Naive thymus-derived CD4-positive, alpha-beta T cell (primary cell): ENCODE measurements at regions of chr3 and their contacts with region 1.

Region 1: DNA sequence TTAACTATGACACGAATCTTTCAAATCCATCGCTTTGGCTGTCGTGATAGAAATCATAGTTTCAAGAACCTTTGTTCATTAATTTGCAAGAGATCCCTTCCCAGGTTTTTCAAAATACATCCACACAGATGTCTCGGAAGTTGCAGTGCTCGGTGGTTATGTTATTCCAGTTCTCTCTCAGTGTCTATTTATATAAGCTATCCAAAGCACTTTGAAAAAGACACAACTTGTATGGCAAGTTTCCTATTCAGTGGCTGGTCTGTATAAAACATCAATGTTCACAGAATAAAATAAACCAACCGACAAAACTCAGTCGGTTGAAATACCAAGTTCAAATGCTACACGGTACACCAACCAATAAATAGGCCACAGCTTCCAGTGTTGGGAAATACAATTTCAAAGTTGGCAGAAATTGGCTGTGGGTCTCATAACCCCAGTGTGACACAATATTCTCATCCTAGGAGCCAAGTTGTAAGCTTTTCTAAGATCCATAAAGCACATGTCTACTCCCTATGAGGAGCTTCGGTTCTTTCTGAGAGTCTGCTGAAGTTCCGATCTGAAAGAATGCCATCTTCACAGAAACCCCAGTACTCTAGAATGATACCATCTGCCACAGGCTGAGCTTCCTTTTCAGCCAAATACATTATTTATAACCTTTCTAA is 23.7 kb downstream of the SATB1 start:
- DNase-seq: no peak
- ATAC-seq: peak; percentile 53
- H3K4me3 ChIP-seq: peak overlapping the region; percentile 3
- H3K4me3 Mint-ChIP-seq: peak overlapping the region; percentile 35 to 85 (median 80)
- H3K27ac ChIP-seq: peak overlapping the region; percentile 64
- H3K27ac Mint-ChIP-seq: peak overlapping the region; percentile 78 to 96 (median 87)
- H3K4me1 ChIP-seq: peaks cover 0 to 92% of the 10 kb centered on the region in 2 donors
- H3K4me1 Mint-ChIP-seq: peaks cover 51 to 100% (median 100%) of the 10 kb centered on the region in 7 donors
- H3K27me3 ChIP-seq: no peaks in the 10 kb centered on the region
- H3K27me3 Mint-ChIP-seq: no peaks in the 10 kb centered on the region

Region 2: DNA sequence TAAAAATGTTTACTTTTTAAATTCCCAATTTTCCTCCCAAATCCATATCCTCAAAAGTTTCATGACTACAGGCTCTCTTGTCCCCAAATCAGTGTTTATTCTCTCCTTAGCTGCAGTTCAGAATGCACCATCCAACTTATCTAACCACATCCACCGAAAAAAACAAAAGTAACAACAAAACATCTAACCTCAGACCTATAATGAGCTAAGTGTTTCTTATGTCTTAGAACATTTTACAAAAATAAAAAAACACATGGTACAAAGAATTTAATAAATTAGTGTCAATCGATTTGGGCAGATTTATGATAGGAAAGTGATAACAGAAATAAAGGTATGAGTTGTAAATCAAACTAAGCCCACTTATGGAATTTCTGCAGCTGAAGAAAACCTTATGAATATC is 10.1 kb after region 1 on chr3:
- CTCF ChIA-PET with region 1: interaction called, 3 read pairs
- POLR2A ChIA-PET with region 1: interaction called, 16 read pairs
- intact Hi-C with region 1: loop called (anchors 1 kb)
- DNase-seq: peak in 7 of 9 donors; percentile 46 to 80 (median 68)
- ATAC-seq: peak; percentile 83
- H3K4me3 ChIP-seq: peak overlapping the region; percentile 9
- H3K4me3 Mint-ChIP-seq: peak overlapping the region; percentile 46 to 88 (median 76)
- H3K27ac ChIP-seq: peak overlapping the region; percentile 55
- H3K27ac Mint-ChIP-seq: peak overlapping the region; percentile 75 to 97 (median 86)
- H3K4me1 ChIP-seq: peaks cover 13 to 87% of the 10 kb centered on the region in 2 donors
- H3K4me1 Mint-ChIP-seq: peaks cover 35 to 98% (median 89%) of the 10 kb centered on the region in 7 donors
- H3K27me3 ChIP-seq: no peaks in the 10 kb centered on the region
- H3K27me3 Mint-ChIP-seq: no peaks in the 10 kb centered on the region

Region 3: DNA sequence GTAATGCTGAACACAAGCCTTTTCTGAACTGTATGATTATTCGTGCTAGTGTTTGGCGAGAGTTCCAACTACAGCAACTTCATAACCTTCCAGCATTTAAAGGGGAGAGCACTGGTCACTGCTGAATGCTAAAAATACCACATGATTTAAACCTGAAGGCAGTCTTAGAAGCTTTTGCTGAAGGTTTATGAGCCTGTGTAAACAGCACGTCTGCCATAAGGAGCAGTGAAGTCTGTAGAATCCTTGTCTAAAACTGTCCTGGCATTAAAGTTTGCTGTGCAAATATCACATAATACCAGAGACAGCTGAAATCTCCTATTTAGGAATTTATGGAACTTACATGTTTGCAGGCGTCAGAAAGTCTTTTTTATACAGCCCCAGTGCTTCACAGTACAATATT is 17.8 kb after region 1 on chr3:
- CTCF ChIA-PET with region 1: interaction called, 4 read pairs
- POLR2A ChIA-PET with region 1: interaction called, 50 read pairs
- intact Hi-C with region 1: loop called (anchors 1 to 2 kb)
- DNase-seq: no peak
- ATAC-seq: no peak
- H3K4me3 ChIP-seq: peak overlapping the region; percentile 0
- H3K4me3 Mint-ChIP-seq: peak overlapping the region in 9 of 10 donors; percentile 83 to 100 (median 96)
- H3K27ac ChIP-seq: peak overlapping the region; percentile 97
- H3K27ac Mint-ChIP-seq: peak overlapping the region; percentile 85 to 96 (median 92)
- H3K4me1 ChIP-seq: peaks cover 13 to 53% of the 10 kb centered on the region in 2 donors
- H3K4me1 Mint-ChIP-seq: peaks cover 45 to 91% (median 80%) of the 10 kb centered on the region in 7 donors
- H3K27me3 ChIP-seq: no peaks in the 10 kb centered on the region
- H3K27me3 Mint-ChIP-seq: no peaks in the 10 kb centered on the region

Region 4: DNA sequence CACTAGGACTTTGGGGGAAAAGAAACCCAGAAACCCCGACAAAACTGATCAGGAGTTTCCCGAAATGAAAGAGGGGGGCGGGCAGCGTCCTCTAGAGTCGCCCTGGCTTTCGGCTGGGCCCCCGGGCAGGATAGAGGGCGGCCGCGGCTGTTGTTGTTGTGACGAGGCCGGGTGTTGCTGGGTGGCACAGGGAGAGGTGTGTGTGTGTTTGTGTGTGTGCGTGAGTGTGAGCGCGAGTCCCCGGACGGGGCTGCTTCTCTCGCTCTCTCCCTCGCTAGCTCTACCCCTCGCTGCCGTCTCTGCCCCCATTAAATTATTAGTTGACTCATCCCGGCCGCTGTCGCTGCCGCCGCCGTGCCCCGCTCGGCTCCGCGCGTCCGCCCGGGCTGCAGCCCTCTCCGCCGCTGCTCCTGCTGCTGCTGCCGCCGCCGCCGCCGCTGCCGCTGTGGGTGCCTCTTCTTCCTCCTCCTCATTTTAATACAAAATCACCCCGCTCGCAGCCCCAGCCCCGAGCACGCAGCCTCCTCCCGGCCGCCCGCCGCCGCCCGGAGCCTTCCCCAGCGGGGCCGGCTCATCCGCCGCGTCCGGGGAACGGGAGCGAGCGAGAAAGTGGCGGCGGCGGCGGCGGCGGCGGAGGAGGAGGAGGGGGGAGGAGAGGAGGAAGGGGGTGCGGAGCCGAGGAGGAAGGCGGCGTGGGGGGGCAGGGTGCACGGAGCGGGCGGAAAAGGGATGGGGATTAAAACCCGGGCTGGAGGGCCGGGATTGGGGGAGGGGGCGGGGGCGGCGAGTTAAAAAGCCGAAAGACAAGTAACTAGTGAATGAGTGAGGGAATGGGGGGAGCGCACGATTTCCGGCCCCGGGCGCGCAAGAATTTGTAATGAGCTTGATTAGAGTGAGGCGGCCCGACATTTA is 23.6 kb after region 1 on chr3 and contains the start of gene SATB1:
- CTCF ChIA-PET with region 1: interaction called, 4 read pairs
- POLR2A ChIA-PET with region 1: interaction called, 50 read pairs
- intact Hi-C with region 1: no loop called
- DNase-seq: peak; percentile 55 to 72 (median 67)
- ATAC-seq: peak; percentile 62
- H3K4me3 ChIP-seq: peak within 1 kb of the TSS; percentile 72
- H3K4me3 Mint-ChIP-seq: peak within 1 kb of the TSS; percentile 91 to 100 (median 98)
- H3K27ac ChIP-seq: peak within 1 kb of the TSS; percentile 97
- H3K27ac Mint-ChIP-seq: peak within 1 kb of the TSS; percentile 87 to 99 (median 98)
- H3K4me1 ChIP-seq: peaks cover 8 to 21% of the 10 kb centered on the region in 2 donors
- H3K4me1 Mint-ChIP-seq: peaks cover 41 to 72% (median 62%) of the 10 kb centered on the region in 7 donors
- H3K27me3 ChIP-seq: no peaks in the 10 kb centered on the region
- H3K27me3 Mint-ChIP-seq: peaks cover 0 to 2% (median 0%) of the 10 kb centered on the region in 5 donors
- total RNA-seq, gene SATB1: 258 to 482 (median 451) TPM

Region 5: GRCh38 chr3:18489939-18490338 is 88.5 kb after region 1 on chr3:
- CTCF ChIA-PET with region 1: no interaction called
- POLR2A ChIA-PET with region 1: no interaction called
- intact Hi-C with region 1: loop called in 1 of 2 experiments (anchors 5 kb)
- DNase-seq: peak in 7 of 9 donors; percentile 6 to 40 (median 16)
- ATAC-seq: peak; percentile 24
- H3K4me3 ChIP-seq: peak overlapping the region; percentile 3
- H3K4me3 Mint-ChIP-seq: peak overlapping the region in 7 of 10 donors; percentile 39 to 77 (median 64)
- H3K27ac ChIP-seq: no peak overlapping the region
- H3K27ac Mint-ChIP-seq: peak overlapping the region in 8 of 9 donors; percentile 12 to 92 (median 54)
- H3K4me1 ChIP-seq: peaks cover 10 to 11% of the 10 kb centered on the region in 2 donors
- H3K4me1 Mint-ChIP-seq: peaks cover 15 to 55% (median 32%) of the 10 kb centered on the region in 7 donors
- H3K27me3 ChIP-seq: no peaks in the 10 kb centered on the region
- H3K27me3 Mint-ChIP-seq: no peaks in the 10 kb centered on the region